ENCODE measurements at regions of chr12 and their contacts with region 1.

Region 1: DNA sequence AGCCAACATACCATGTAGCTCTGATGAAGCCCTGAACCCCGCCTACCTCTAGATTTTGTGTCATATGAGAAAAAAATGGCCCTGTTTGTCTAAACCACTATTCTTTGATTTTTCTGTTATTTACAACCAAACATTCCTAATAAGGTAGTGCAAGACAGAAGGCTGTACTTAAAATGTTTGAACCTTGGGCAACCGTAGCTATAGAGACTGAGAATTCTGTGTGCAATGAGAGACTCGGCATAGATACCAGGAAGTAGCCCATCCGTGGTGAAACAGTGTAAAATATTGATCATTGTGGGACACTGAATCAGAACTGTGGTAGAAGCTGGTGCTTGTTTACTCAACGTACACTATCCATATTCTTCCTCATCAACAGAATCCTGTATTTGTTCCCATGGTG is 86.5 kb upstream of the TMCC3 start:
- DNase-seq: no peak
- ATAC-seq: no peak
- H3K4me3 ChIP-seq: no peak overlapping the region
- H3K27ac ChIP-seq: no peak overlapping the region
- H3K4me1 ChIP-seq: no peaks in the 10 kb centered on the region
- H3K27me3 ChIP-seq: no peaks in the 10 kb centered on the region
- CTCF ChIP-seq: no peak

Region 2: GRCh38 chr12:93938931-93939330 is 797.9 kb before region 1 on chr12:
- intact Hi-C with region 1: no loop called
- DNase-seq: no peak
- ATAC-seq: no peak
- H3K4me3 ChIP-seq: no peak overlapping the region
- H3K27ac ChIP-seq: no peak overlapping the region
- H3K4me1 ChIP-seq: peaks cover 4% of the 10 kb centered on the region
- H3K27me3 ChIP-seq: no peaks in the 10 kb centered on the region
- CTCF ChIP-seq: no peak

Region 3: GRCh38 chr12:94779485-94779884 is 42.7 kb after region 1 on chr12:
- intact Hi-C with region 1: loop called in 1 of 2 experiments (anchors 1 kb)
- DNase-seq: no peak
- ATAC-seq: no peak
- H3K4me3 ChIP-seq: no peak overlapping the region
- H3K27ac ChIP-seq: no peak overlapping the region
- H3K4me1 ChIP-seq: no peaks in the 10 kb centered on the region
- H3K27me3 ChIP-seq: peaks cover 0 to 2% (median 0%) of the 10 kb centered on the region in 3 donors
- CTCF ChIP-seq: no peak

Region 4: GRCh38 chr12:95215949-95216348 is 479.1 kb after region 1 on chr12:
- intact Hi-C with region 1: no loop called
- DNase-seq: no peak
- ATAC-seq: no peak
- H3K4me3 ChIP-seq: peak overlapping the region; percentile 88
- H3K27ac ChIP-seq: no peak overlapping the region
- H3K4me1 ChIP-seq: peaks cover 28% of the 10 kb centered on the region
- H3K27me3 ChIP-seq: no peaks in the 10 kb centered on the region
- CTCF ChIP-seq: no peak